ENCODE measurements at regions of chr3 and their contacts with region 1.

Region 1: GRCh38 chr3:66971891-66972551 is 26.1 kb upstream of the KBTBD8 start:
- DNase-seq: peak; percentile 79
- H3K4me3 Mint-ChIP-seq: peak overlapping the region; percentile 68
- H3K27ac Mint-ChIP-seq: peak overlapping the region; percentile 61
- H3K4me1 Mint-ChIP-seq: peaks cover 13% of the 10 kb centered on the region
- H3K27me3 Mint-ChIP-seq: no peaks in the 10 kb centered on the region

Region 2: GRCh38 chr3:66938338-66938963 is 33.6 kb before region 1 on chr3:
- CTCF ChIA-PET with region 1: interaction called, 47 read pairs
- POLR2A ChIA-PET with region 1: no interaction called
- intact Hi-C with region 1: no loop called
- DNase-seq: peak; percentile 29
- H3K4me3 Mint-ChIP-seq: no peak overlapping the region
- H3K27ac Mint-ChIP-seq: no peak overlapping the region
- H3K4me1 Mint-ChIP-seq: no peaks in the 10 kb centered on the region
- H3K27me3 Mint-ChIP-seq: peaks cover 6% of the 10 kb centered on the region

Region 3: DNA sequence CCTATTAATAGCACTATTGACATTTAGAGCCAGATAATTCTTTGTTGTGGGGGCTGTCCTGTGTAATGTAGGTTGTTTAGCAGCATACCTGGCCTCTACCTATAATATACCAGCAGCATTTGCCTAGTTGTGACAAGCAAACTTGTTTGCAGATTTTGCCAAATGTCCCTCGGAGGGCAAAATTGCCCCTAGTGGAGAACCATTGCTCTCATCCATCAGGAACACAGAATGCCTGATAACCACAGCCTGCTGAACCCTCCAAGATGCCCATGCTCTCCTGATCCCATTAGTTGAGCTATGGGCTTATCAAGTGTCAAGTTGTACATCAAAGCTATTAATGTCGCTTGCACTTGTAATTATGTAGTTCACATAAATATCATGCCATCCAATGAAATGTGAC is 11.1 kb after region 1 on chr3:
- CTCF ChIA-PET with region 1: interaction called, 70 read pairs
- POLR2A ChIA-PET with region 1: no interaction called
- intact Hi-C with region 1: no loop called
- DNase-seq: no peak
- H3K4me3 Mint-ChIP-seq: no peak overlapping the region
- H3K27ac Mint-ChIP-seq: no peak overlapping the region
- H3K4me1 Mint-ChIP-seq: no peaks in the 10 kb centered on the region
- H3K27me3 Mint-ChIP-seq: peaks cover 3% of the 10 kb centered on the region

Region 4: DNA sequence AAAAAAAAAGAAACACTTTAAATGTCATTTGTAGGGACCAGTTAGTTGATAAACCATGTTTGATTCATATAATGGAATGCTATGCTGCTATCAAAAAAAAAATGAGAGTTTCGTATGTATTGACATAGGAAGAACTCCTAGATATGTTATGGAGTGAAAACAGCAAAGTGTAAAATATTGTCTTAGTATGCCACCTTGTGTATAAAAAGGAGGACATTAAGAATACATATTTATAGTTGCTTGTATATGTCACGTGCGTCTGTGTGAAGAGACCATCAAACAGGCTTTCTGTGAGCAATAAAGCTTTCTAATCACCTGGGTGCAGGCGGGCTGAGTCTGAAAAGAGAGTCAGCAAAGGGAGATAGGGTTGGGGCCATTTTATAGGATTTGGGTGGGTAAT is 65.6 kb after region 1 on chr3:
- CTCF ChIA-PET with region 1: interaction called, 40 read pairs
- POLR2A ChIA-PET with region 1: no interaction called
- intact Hi-C with region 1: loop called (anchors 1 kb)
- DNase-seq: no peak
- H3K4me3 Mint-ChIP-seq: no peak overlapping the region
- H3K27ac Mint-ChIP-seq: no peak overlapping the region
- H3K4me1 Mint-ChIP-seq: no peaks in the 10 kb centered on the region
- H3K27me3 Mint-ChIP-seq: no peaks in the 10 kb centered on the region

Region 5: DNA sequence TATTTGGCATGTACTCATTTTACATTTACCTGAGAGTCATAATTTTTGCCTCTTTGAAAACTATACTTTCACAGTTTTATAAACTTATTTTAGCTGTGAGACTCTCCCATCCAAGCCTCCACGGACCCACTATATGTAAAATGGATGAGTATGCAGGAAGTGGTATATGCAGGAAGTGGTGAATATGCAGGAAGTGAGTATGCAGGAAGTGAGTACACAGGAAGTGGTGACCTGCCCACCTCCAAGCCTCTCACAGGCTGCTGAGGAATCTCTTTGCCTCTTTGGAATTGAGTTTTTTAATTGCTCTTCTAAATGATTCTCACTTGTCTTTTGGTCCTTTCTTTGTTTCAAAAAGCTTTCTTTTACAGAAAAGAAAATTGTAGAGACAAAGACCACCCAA is 111.3 kb after region 1 on chr3:
- CTCF ChIA-PET with region 1: interaction called, 6 read pairs
- POLR2A ChIA-PET with region 1: interaction called, 3 read pairs
- intact Hi-C with region 1: loop called (anchors 5 kb)
- DNase-seq: peak; percentile 71
- H3K4me3 Mint-ChIP-seq: peak overlapping the region; percentile 20
- H3K27ac Mint-ChIP-seq: peak overlapping the region; percentile 83
- H3K4me1 Mint-ChIP-seq: peaks cover 21% of the 10 kb centered on the region
- H3K27me3 Mint-ChIP-seq: no peaks in the 10 kb centered on the region

Region 6: DNA sequence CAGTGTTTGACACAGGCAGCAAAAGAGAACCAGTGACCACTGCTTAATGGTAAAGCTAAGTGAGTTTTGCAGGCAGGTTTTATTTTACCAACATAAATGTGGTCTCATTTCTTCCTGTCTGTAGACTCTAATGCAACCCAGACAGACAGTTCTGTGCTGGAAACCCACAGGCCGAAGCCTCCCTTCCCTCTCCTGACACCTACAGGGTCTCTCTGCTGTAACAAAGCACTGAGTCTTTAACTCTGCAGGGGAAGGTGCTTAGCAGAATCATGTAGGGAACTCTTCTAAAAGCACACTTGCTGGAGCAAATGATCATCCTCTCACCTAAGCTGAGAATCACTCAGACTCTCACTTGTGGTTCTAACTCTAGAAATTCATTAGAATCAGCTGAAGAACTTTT is 226.4 kb after region 1 on chr3:
- CTCF ChIA-PET with region 1: no interaction called
- POLR2A ChIA-PET with region 1: no interaction called
- intact Hi-C with region 1: no loop called
- DNase-seq: no peak
- H3K4me3 Mint-ChIP-seq: no peak overlapping the region
- H3K27ac Mint-ChIP-seq: no peak overlapping the region
- H3K4me1 Mint-ChIP-seq: no peaks in the 10 kb centered on the region
- H3K27me3 Mint-ChIP-seq: no peaks in the 10 kb centered on the region

Region 7: DNA sequence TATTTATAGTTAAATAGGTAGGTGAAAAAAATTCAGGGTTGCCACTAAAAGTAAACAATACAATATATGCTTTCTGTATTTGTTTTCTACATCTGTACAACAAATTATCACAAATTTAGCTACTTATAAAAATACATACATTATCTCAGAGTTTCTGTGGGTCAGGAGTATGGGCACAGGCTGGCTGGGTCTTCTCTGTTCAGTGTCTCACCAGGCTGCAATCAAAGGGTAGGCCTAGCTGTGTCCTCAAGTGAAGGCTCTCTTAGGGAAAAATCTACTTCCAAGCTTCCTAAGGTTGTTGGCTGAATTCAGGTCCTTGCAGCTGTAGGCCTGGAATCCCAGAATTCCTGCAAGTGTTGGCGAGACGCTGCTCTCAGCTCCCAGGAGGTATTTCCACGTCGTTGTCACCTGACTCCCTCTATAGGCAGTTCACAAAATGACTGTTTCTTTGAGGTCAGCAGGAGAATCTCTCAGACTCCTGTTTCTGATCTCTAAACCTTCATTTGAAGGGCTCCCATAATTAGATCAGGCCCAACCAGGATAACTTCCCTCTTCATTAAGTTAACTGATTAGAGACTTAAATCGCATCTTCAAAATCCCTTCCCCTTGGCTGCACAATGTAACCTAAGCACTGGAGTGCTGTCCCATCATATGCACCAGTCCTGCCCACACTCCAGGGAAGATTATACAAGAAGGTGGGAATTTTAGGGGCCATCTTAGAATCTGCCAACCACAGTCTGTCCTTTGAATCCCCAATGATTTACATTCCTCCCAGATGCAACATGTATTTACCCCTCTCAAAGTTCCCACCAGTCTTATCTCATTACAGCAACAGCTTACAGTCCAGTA is 385.8 kb after region 1 on chr3:
- CTCF ChIA-PET with region 1: interaction called, 7 read pairs
- POLR2A ChIA-PET with region 1: no interaction called
- intact Hi-C with region 1: loop called (anchors 5 kb)
- DNase-seq: no peak
- H3K4me3 Mint-ChIP-seq: no peak overlapping the region
- H3K27ac Mint-ChIP-seq: no peak overlapping the region
- H3K4me1 Mint-ChIP-seq: peaks cover 23% of the 10 kb centered on the region
- H3K27me3 Mint-ChIP-seq: peaks cover 1% of the 10 kb centered on the region

Region 8: GRCh38 chr3:68876112-68876713 is 1904.2 kb after region 1 on chr3:
- CTCF ChIA-PET with region 1: interaction called, 39 read pairs
- POLR2A ChIA-PET with region 1: no interaction called
- intact Hi-C with region 1: no loop called
- DNase-seq: peak; percentile 23
- H3K4me3 Mint-ChIP-seq: no peak overlapping the region
- H3K27ac Mint-ChIP-seq: no peak overlapping the region
- H3K4me1 Mint-ChIP-seq: no peaks in the 10 kb centered on the region
- H3K27me3 Mint-ChIP-seq: peaks cover 9% of the 10 kb centered on the region

Measured in activated CD4-positive, alpha-beta memory T cell treated with anti-CD3 and anti-CD28 coated beads for 36 hours (primary cell).